ENCODE measurements at regions of chr9 and their contacts with region 1.

Region 1: GRCh38 chr9:81689343-81690190 is at the start of gene TLE1:
- DNase-seq: peak; percentile 99
- ATAC-seq: peak; percentile 98
- total RNA-seq, gene TLE1: 9.8 TPM

Region 2: DNA sequence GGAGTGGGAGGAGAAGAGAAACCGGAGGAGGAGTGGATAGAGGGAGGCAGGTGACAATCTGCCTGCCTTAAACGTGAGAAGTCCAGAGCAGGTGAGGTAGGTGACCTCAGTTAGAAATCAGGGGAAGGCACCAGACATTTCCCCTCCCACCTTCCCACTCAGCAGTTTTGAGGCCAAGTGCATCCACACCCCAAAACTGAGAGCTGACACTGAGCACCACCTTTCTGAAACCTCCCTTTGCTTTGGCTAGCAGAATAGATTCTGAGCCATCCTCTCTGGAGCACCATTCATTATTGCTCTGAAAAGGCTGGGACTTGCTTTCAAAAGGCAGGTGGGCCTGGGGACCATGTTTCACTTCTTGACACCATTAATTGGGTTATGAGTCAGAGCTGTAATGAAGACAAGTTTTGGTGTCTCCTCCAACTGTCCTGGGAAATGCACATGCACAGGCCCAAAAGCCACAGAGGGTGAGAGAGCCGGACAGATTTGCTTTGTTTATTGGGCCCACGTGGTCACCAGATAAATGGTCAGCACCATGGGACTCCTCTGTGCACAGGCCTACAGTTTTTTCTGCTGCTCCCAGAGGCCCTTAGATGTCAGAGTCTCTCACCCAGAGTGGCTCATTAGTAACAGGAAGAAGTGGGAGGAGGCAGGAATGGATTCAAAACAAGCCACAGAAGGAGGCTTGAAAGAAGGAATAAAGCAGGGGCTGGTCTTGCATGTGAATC is 314.9 kb before region 1 on chr9:
- intact Hi-C with region 1: loop called (anchors 10 kb)
- DNase-seq: no peak
- ATAC-seq: peak; percentile 35

Region 3: GRCh38 chr9:81826517-81826906 is 136.9 kb after region 1 on chr9:
- intact Hi-C with region 1: loop called (anchors 10 kb)
- DNase-seq: peak; percentile 85
- ATAC-seq: peak; percentile 97

Region 4: GRCh38 chr9:81848472-81848871 is 158.9 kb after region 1 on chr9:
- intact Hi-C with region 1: no loop called
- DNase-seq: no peak
- ATAC-seq: no peak

Region 5: DNA sequence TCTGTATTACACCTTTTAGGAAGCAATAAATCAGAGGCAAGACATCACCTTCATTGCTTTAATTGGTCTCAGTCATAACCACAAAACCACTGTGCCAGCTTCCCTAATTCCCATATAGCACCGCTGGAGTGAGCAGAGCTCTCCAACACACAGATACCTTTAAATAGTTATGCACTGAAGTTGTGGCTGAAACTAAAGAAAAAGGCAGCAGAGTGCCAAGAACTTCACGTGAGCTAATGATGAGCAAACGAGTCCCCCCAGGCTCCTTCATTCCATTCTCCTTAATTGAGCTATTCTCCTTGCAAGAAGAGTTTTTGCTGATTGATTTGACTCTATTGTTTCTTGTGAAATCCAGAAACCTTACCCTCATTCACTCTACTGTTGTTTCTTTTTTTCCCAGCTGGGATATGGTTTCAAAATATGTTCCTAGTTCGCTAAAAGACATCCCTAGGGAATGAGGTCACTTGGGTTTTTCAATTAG is 800.5 kb after region 1 on chr9:
- intact Hi-C with region 1: loop called (anchors 10 kb)
- DNase-seq: no peak
- ATAC-seq: no peak

Measured in Right ventricle myocardium inferior (tissue), 1 donor.